Testis (tissue), 5 donors: ENCODE measurements at regions of chr18 and their contacts with region 1.

Region 1: GRCh38 chr18:1578505-1578904 is 673.8 kb downstream of the ADCYAP1 start:
- DNase-seq: no peak
- H3K4me3 ChIP-seq: no peak overlapping the region
- H3K27ac ChIP-seq: no peak overlapping the region
- H3K4me1 ChIP-seq: peaks cover 2% of the 10 kb centered on the region
- H3K27me3 ChIP-seq: no peaks in the 10 kb centered on the region
- CTCF ChIP-seq: no peak
- POLR2A ChIP-seq: no peak

Region 2: GRCh38 chr18:1261054-1261453 is 317.5 kb before region 1 on chr18:
- intact Hi-C with region 1: no loop called
- DNase-seq: no peak
- H3K4me3 ChIP-seq: no peak overlapping the region
- H3K27ac ChIP-seq: no peak overlapping the region
- H3K4me1 ChIP-seq: no peaks in the 10 kb centered on the region
- H3K27me3 ChIP-seq: no peaks in the 10 kb centered on the region
- CTCF ChIP-seq: no peak
- POLR2A ChIP-seq: no peak

Region 3: DNA sequence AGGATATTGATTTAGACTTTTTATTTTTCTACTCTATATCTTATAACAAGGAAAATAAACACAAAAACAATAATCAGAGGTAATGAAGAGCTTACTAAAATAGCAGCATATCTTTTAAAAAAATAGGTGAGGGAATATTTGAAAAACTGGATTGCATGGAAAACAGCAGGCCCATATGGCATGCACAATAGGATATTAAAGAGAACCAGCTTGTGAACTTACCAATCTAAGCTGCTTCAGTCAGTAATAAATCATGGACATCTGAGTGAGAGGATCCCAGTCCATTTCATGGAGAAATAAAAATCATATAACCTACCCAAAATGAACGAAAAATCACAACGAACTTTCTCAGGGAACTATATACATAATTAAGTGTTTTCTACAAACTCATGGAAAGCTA is 39.2 kb before region 1 on chr18:
- intact Hi-C with region 1: loop called (anchors 2 kb)
- DNase-seq: no peak
- H3K4me3 ChIP-seq: no peak overlapping the region
- H3K27ac ChIP-seq: no peak overlapping the region
- H3K4me1 ChIP-seq: no peaks in the 10 kb centered on the region
- H3K27me3 ChIP-seq: no peaks in the 10 kb centered on the region
- CTCF ChIP-seq: no peak
- POLR2A ChIP-seq: no peak